Dendritic cell treated with granulocyte-macrophage colony-stimulating factor and Interleukin-4, amounts not matched to agents 40 ng/mL and 50 ng/mL, for 4 days (primary cell): ENCODE measurements at regions of chr17 and their contacts with region 1.

Region 1: GRCh38 chr17:75764711-75765421 is at the start of gene GALK1:
- H3K4me3 Mint-ChIP-seq: peak within 1 kb of the TSS; percentile 79
- H3K27ac Mint-ChIP-seq: peak within 1 kb of the TSS; percentile 79
- H3K4me1 Mint-ChIP-seq: peaks cover 27% of the 10 kb centered on the region
- H3K27me3 Mint-ChIP-seq: peaks cover 2% of the 10 kb centered on the region

Region 2: GRCh38 chr17:75808905-75809715 is 44.2 kb after region 1 on chr17:
- intact Hi-C with region 1: no loop called
- H3K4me3 Mint-ChIP-seq: no peak overlapping the region
- H3K27ac Mint-ChIP-seq: no peak overlapping the region
- H3K4me1 Mint-ChIP-seq: no peaks in the 10 kb centered on the region
- H3K27me3 Mint-ChIP-seq: no peaks in the 10 kb centered on the region

Region 3: GRCh38 chr17:75830164-75830929 is 65.5 kb after region 1 on chr17:
- intact Hi-C with region 1: loop called (anchors 5 kb)
- H3K4me3 Mint-ChIP-seq: no peak overlapping the region
- H3K27ac Mint-ChIP-seq: peak overlapping the region; percentile 84
- H3K4me1 Mint-ChIP-seq: peaks cover 53% of the 10 kb centered on the region
- H3K27me3 Mint-ChIP-seq: no peaks in the 10 kb centered on the region